ENCODE measurements at regions of chr4 and their contacts with region 1.

Region 1: DNA sequence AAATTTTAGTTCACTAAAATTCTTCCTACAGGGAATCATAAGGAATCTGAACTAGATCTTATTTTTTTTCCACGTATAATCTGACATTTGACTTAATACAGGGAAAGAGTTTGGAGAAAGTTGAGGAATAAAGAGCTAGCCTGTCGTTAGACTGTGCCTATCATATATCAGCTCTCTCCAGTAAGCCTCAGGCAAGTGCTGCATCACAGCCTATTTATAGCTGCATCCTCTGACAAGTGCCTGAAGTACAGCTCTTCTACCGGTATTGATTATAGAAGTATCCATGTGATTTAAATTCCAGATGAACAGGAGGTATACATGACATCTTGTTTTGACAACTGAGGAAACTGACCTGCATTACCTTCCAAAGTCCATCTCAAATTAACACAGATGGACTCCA is 248.9 kb downstream of the TLL1 start:
- DNase-seq: no peak
- ATAC-seq: no peak
- H3K4me3 ChIP-seq: no peak overlapping the region
- H3K27ac ChIP-seq: no peak overlapping the region
- H3K4me1 ChIP-seq: no peaks in the 10 kb centered on the region
- H3K27me3 ChIP-seq: no peaks in the 10 kb centered on the region
- CTCF ChIP-seq: no peak
- EP300 ChIP-seq: no peak
- POLR2A ChIP-seq: no peak
- RAD21 ChIP-seq: no peak

Region 2: DNA sequence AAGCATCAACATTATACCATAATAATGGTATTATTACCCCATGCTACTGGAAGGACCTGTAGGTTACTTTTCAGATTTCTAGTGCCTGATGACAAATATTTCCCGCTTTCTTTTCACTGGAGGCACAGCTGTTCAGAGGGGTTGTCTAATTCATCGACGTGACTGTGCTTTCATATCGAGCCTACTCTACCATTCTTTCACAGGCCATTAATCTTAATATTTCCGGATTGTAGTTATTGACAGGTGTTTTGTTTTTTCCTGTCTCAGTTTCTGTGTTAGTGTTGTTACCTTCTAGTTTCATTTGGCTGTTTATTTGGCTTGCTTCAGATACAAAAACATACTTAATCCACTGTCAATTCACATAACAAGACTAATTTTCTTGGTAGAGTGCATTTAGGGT is 781.5 kb after region 1 on chr4:
- CTCF ChIA-PET with region 1: no interaction called
- POLR2A ChIA-PET with region 1: no interaction called
- in situ Hi-C with region 1: no loop called
- intact Hi-C with region 1: loop called (anchors 5 kb)
- DNase-seq: no peak
- ATAC-seq: no peak
- H3K4me3 ChIP-seq: no peak overlapping the region
- H3K27ac ChIP-seq: no peak overlapping the region
- H3K4me1 ChIP-seq: no peaks in the 10 kb centered on the region
- H3K27me3 ChIP-seq: no peaks in the 10 kb centered on the region
- CTCF ChIP-seq: no peak
- EP300 ChIP-seq: no peak
- POLR2A ChIP-seq: no peak
- RAD21 ChIP-seq: no peak

Measured in HepG2 (cell line).